ENCODE measurements at regions of chr18 and their contacts with region 1.

Region 1: GRCh38 chr18:32158108-32158624 is 31.7 kb upstream of the MEP1B start:
- DNase-seq: peak; percentile 63
- H3K4me3 Mint-ChIP-seq: peak overlapping the region; percentile 61
- H3K27ac Mint-ChIP-seq: peak overlapping the region; percentile 49
- H3K4me1 Mint-ChIP-seq: peaks cover 9% of the 10 kb centered on the region
- H3K27me3 Mint-ChIP-seq: peaks cover 18% of the 10 kb centered on the region

Region 2: GRCh38 chr18:31996007-31996406 is 162.2 kb before region 1 on chr18:
- intact Hi-C with region 1: no loop called
- DNase-seq: no peak
- H3K4me3 Mint-ChIP-seq: no peak overlapping the region
- H3K27ac Mint-ChIP-seq: no peak overlapping the region
- H3K4me1 Mint-ChIP-seq: no peaks in the 10 kb centered on the region
- H3K27me3 Mint-ChIP-seq: peaks cover 4% of the 10 kb centered on the region

Region 3: DNA sequence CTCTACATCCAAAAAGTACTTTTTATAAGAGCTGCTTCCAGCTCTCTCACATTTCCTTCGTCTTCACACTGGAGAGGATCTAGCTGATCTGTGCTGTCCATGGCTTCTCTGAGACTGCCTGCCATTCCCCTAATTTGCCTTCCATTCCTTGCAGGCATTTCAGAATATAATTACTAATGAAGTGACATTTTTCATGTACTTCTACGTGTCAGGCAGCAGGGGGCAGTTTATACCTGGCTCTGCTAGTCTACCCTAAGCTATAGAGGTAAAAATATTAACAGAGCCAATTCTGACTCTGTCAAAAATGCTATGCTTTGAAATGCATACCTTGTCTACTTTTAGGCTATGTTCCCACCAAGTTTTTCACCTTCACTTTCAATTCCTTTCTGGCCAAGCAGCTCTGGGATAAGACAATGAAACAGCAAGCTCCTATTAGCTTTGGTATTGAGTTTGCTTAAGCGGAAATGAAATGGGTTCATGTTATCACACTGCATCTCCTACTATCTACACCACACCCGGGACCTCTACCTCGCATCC is 113.6 kb after region 1 on chr18:
- intact Hi-C with region 1: loop called (anchors 10 kb)
- DNase-seq: no peak
- H3K4me3 Mint-ChIP-seq: no peak overlapping the region
- H3K27ac Mint-ChIP-seq: no peak overlapping the region
- H3K4me1 Mint-ChIP-seq: no peaks in the 10 kb centered on the region
- H3K27me3 Mint-ChIP-seq: peaks cover 6% of the 10 kb centered on the region

Region 4: GRCh38 chr18:32349728-32350395 is 191.7 kb after region 1 on chr18:
- intact Hi-C with region 1: loop called (anchors 10 kb)
- DNase-seq: no peak
- H3K4me3 Mint-ChIP-seq: no peak overlapping the region
- H3K27ac Mint-ChIP-seq: no peak overlapping the region
- H3K4me1 Mint-ChIP-seq: no peaks in the 10 kb centered on the region
- H3K27me3 Mint-ChIP-seq: peaks cover 16% of the 10 kb centered on the region

Region 5: DNA sequence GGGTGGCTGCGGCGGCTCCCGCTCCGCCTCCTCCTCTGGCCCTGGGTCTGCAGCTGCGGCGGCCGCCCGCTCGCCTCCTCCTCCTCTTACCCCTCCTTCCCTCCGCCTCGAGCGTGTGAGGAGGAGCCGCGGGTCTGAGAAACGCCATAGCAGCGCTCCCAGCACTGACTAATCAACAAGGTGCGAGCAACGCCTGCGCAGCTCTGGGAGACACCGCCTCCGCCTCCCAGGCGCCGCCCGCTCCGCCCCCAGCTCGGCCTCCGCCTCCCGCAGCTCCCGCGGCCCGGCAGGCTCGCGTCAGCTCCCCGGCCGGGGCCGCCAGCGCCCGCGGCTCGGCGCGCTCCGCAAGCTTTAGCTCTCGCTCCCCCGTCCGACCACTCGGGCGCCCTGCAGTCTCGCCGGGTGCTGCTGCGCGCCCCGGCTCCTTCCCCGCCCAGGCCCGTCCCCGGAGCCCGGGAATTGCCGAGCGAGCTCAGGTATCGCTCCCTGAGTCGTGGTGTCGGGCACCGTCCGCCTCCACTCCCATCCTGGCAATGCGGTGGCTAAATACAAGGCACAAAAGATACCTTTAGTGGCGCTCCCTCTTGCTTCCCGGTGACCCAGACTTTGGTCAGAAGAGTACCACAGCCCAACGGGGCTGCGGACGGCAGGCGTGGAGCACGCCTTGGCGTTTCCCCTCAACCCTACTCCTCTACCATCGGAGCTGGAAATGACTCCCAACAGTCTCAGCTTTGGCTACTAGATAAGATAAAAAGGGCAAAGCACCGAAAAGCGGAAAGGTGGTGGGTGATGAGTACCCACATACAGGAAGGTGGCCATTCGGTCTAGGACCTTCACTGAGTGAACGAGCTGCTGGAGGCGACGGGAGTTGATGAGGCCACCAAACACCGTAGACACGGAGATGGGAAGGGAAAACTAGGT is 312.8 kb after region 1 on chr18 and contains the start of gene GAREM1:
- intact Hi-C with region 1: loop called (anchors 10 kb)
- DNase-seq: peak; percentile 84
- H3K4me3 Mint-ChIP-seq: peak within 1 kb of the TSS; percentile 77
- H3K27ac Mint-ChIP-seq: no peak within 1 kb of the TSS
- H3K4me1 Mint-ChIP-seq: peaks cover 28% of the 10 kb centered on the region
- H3K27me3 Mint-ChIP-seq: peaks cover 69% of the 10 kb centered on the region
- total RNA-seq, gene GAREM1: not detected in 2 replicates

Region 6: GRCh38 chr18:32552421-32553030 is 394.4 kb after region 1 on chr18:
- intact Hi-C with region 1: loop called (anchors 1 kb)
- DNase-seq: peak; percentile 28
- H3K4me3 Mint-ChIP-seq: no peak overlapping the region
- H3K27ac Mint-ChIP-seq: no peak overlapping the region
- H3K4me1 Mint-ChIP-seq: no peaks in the 10 kb centered on the region
- H3K27me3 Mint-ChIP-seq: peaks cover 16% of the 10 kb centered on the region